PC-9 (cell line): ENCODE measurements at regions of chr2 and their contacts with region 1.

Region 1: DNA sequence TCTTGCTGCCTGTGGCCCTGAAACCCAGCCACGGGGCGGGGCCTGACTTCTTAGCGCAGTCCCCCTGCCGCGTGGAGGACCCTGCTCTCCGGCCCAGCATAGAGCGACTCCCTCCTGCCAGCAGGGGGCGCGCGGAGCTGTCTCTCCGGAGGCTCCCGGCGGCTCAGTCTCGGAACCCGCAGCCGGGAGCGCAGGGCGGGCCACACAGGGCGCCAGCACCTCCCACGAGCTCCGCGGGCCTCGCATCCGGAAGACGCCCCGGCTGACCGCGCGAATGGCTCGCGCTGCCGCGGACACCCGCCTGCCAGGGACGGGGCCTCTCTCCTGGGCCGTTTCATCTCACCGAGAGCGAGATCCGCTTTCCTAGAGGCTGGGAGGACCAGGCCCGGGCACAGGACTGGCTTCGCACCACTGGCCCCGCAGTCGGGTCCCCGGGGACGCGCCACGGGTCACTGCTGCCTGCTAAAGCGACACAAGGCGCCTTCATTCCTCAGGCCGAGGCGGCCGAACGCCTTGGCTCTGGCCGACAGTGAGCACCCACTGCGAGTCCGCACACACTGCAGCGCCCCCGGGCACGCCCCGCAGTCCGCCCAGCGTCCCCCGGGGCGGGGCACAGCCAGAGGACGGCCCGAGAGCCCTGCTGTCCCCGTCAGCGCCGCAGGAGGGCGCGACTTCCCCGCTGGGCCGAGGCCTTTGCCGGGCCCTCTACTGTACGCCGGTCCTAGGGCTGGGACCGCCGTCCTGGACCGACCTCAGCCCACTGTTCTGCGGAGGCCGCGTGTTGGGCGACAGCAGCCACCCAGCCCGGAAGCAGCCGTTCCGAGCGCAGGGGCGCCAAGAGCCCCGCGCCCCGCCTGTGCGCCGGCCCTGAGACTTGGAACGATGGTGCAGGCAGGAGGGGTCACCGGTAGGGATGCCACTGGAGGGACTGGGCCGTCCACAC is 39.0 kb upstream of the ARHGEF4 start:
- DNase-seq: peak; percentile 53 to 91
- H3K4me3 ChIP-seq: peak overlapping the region; percentile 99
- H3K27ac ChIP-seq: 0 out of 2 replicates have a peak overlapping the region, but pooled peaks have one; percentile 46
- H3K4me1 ChIP-seq: no peaks in the 10 kb centered on the region
- H3K27me3 ChIP-seq: no peaks in the 10 kb centered on the region
- CTCF ChIP-seq: peak; percentile 81

Region 2: DNA sequence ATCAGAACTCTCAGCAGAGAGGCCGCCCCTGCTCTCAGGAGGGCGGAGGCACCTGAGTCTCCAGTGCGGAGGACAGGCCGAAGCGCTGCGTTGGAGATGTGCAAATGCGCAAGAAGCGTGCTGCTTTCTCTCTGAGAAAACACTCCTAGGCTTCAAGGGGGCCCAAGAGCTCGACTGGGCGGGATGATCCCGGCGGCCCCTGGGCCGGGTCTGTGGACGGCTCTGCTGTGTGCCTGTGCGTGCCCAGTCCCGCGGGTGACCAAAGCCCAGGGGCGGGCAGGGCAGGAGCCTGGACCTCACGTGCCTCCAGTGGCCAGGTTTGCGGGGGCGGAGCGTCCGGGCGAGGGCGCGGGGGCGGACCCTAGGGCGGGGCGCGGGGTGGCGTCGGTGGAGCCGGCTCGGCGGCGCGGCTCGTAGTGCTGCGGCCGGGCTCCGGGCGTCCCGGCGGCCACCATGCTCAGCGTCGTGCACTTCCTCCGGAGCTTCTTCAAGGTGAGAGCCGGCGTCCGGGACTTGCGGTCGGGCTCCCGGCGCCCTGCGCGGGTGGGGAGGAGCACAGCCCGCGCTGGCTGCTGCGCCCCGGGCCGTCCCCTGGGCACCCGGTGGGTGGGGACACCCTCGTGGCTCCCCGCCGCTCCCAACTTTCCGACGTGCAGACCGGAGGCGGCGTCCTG is 38.9 kb after region 1 on chr2 and contains the start of gene ARHGEF4:
- CTCF ChIA-PET with region 1: interaction called, 7 read pairs
- POLR2A ChIA-PET with region 1: no interaction called
- intact Hi-C with region 1: loop called (anchors 2 kb)
- DNase-seq: peak; percentile 42 to 89
- H3K4me3 ChIP-seq: peak within 1 kb of the TSS; percentile 75
- H3K27ac ChIP-seq: no peak within 1 kb of the TSS
- H3K4me1 ChIP-seq: peaks cover 10% of the 10 kb centered on the region
- H3K27me3 ChIP-seq: no peaks in the 10 kb centered on the region
- CTCF ChIP-seq: no peak
- total RNA-seq, gene ARHGEF4: 16.1 and 20.0 TPM in 2 replicates

Region 3: DNA sequence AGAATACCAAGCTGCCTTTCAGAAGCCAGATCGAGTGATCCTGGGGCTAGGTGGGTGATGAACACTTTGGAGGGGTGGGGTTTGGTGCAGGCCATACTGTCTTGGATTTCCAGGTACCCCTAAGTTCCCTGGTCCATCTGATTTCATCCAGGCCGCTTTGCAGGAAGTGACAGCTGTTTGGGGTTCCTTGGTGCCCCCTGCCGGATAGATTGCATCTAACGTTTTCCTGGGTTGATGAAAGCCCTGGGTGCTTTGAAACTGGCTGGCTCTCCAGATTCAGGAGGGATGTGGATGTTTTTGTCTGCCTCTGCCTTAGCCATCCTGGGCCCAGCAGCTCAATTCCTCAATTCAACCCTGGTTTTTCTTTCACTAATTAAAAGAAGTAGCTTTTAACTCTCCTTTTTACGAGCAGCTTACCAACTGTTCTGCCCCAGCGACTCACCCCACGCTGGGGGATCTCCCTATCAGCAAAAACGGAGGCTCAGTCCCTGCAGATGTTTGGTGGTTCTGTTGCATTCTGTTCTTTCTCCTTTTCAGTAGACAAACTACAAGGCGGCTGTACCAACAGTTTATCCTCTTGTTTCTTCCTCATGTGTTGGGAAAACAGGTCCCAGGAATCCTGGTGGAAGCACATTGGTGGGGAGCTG is 76.1 kb after region 1 on chr2:
- CTCF ChIA-PET with region 1: interaction called, 5 read pairs
- POLR2A ChIA-PET with region 1: no interaction called
- intact Hi-C with region 1: loop called (anchors 1 kb)
- DNase-seq: peak; percentile 53 to 68
- H3K4me3 ChIP-seq: no peak overlapping the region
- H3K27ac ChIP-seq: no peak overlapping the region
- H3K4me1 ChIP-seq: no peaks in the 10 kb centered on the region
- H3K27me3 ChIP-seq: no peaks in the 10 kb centered on the region
- CTCF ChIP-seq: peak; percentile 80

Region 4: GRCh38 chr2:130920415-130921163 is 122.8 kb after region 1 on chr2:
- CTCF ChIA-PET with region 1: interaction called, 4 read pairs
- POLR2A ChIA-PET with region 1: no interaction called
- intact Hi-C with region 1: loop called (anchors 1 kb)
- DNase-seq: peak; percentile 61 to 71
- H3K4me3 ChIP-seq: no peak overlapping the region
- H3K27ac ChIP-seq: no peak overlapping the region
- H3K4me1 ChIP-seq: no peaks in the 10 kb centered on the region
- H3K27me3 ChIP-seq: no peaks in the 10 kb centered on the region
- CTCF ChIP-seq: peak; percentile 92

Region 5: DNA sequence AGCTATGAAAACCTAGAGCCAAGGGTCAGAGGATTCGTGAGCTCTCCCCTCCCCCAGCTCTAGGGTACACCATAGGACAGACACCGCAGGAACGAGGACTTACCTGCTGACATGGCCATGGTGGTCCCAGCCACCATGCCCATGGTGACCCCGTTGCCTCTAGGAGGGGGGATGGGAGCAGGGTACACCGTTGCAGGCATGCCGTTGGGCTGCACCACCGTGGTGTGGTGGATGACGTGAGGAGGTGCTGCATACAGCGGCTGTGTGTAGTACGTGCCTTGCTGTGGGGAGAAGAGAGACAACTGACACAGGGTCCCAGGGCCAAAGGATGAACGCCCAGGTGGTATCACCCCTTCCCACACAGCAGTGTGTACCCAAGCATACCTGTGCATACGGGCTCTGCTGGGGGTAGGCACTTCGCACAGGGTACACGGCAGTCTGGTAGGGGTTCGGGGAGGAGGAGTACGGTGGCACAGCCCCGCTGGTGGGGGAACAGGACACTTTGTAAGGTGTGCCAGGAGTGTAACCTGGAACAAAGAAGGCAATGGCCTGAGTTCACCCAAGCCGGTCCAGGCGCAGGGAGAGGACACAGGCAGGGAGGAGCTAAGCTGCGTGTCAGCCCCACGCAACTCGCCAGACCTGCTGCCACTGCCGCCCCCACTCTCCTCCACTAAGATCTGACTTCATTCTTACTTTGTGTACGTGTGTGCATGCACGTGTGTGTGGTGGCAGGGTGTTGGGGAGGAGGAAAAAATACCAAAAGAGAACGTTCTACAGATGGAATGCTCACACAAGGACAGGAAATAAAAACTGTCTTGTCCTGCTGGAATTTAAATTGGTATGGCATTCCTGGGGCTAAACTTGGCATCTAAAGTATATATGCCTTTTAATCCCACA is 257.7 kb after region 1 on chr2:
- CTCF ChIA-PET with region 1: interaction called, 11 read pairs
- POLR2A ChIA-PET with region 1: no interaction called
- intact Hi-C with region 1: no loop called
- DNase-seq: no peak
- H3K4me3 ChIP-seq: no peak overlapping the region
- H3K27ac ChIP-seq: no peak overlapping the region
- H3K4me1 ChIP-seq: no peaks in the 10 kb centered on the region
- H3K27me3 ChIP-seq: no peaks in the 10 kb centered on the region
- CTCF ChIP-seq: no peak

Region 6: DNA sequence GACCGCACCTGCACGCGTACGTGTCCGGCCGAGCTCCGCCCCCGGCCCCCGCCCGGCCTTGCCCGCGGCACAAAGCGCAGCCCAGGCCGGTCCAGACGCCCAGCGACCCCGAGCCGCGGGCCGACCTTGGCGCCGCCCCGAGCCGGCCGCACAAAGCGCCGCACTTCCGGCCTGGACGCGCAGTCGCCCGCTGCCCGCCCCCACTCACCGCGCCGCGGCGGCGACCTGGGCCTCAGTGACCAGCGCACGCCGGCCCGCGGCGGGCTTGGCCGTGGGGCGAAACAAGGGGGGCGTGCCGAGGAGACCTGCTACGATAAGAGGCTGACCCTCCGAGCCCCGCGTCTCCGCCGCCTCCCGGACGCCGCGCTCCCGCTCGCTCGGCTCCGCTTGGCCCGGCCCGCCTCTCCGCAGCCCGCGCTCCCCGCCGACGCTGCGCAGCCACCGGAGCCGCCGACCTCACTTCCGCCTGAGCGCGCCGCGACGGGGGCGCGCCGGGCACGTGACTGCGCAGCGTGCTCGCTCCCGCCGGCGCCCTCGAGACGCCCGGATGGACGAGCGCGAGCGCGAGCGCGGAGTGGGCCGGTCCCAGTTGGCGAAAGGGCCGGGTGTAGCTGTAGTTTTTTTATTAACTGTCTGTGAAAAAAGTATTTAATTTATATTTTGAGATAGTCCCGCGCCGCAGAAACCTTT is 295.4 kb after region 1 on chr2 and contains the start of gene FAM168B:
- CTCF ChIA-PET with region 1: no interaction called
- POLR2A ChIA-PET with region 1: no interaction called
- intact Hi-C with region 1: loop called (anchors 5 kb)
- DNase-seq: peak; percentile 57 to 89
- H3K4me3 ChIP-seq: peak within 1 kb of the TSS; percentile 99
- H3K27ac ChIP-seq: peak within 1 kb of the TSS; percentile 57
- H3K4me1 ChIP-seq: peaks cover 6% of the 10 kb centered on the region; the same call in 1 of the 2 replicates
- H3K27me3 ChIP-seq: no peaks in the 10 kb centered on the region
- CTCF ChIP-seq: no peak
- total RNA-seq, gene FAM168B: 66.6 and 79.6 TPM in 2 replicates

Region 7: GRCh38 chr2:131145040-131145439 is 347.3 kb after region 1 on chr2:
- CTCF ChIA-PET with region 1: no interaction called
- POLR2A ChIA-PET with region 1: no interaction called
- intact Hi-C with region 1: loop called (anchors 5 kb)
- DNase-seq: no peak
- H3K4me3 ChIP-seq: no peak overlapping the region
- H3K27ac ChIP-seq: no peak overlapping the region
- H3K4me1 ChIP-seq: no peaks in the 10 kb centered on the region
- H3K27me3 ChIP-seq: no peaks in the 10 kb centered on the region
- CTCF ChIP-seq: no peak